ENCODE measurements at regions of chr12 and their contacts with region 1.

Region 1: GRCh38 chr12:80837348-80837985 is 100.3 kb downstream of the LIN7A start:
- DNase-seq: no peak
- ATAC-seq: peak; percentile 90
- H3K4me3 ChIP-seq: no peak overlapping the region
- H3K27ac ChIP-seq: no peak overlapping the region
- H3K4me1 ChIP-seq: 0 out of 2 replicates have a peak, but pooled peaks cover 2% of the 10 kb centered on the region
- H3K27me3 ChIP-seq: no peaks in the 10 kb centered on the region
- CTCF ChIP-seq: peak; percentile 56 to 73 (median 68)
- EP300 ChIP-seq: no peak
- POLR2A ChIP-seq: no peak
- RAD21 ChIP-seq: peak; percentile 42

Region 2: DNA sequence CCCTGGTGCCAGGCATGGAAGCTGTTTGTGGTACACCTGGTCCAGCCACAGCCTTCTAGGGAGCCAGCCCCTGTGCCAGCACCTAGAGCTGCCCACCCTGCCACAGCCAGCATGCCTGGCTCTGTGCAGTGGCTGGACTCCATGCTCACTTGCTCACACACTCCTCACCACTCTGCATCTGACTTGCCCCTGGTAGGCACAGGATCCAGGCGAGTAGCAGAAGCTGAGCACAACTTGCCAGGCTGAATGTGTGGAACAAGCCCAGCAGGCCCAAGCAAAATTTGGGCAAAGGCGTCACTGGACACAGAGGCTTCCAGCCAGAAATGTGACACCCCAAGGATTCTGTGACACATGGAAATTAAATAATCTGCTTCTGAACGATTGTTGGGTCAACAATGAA is 14.1 kb before region 1 on chr12:
- CTCF ChIA-PET with region 1: interaction called, 36 read pairs
- POLR2A ChIA-PET with region 1: interaction called, 5 read pairs
- RAD21 ChIA-PET with region 1: no interaction called
- SMC1A ChIA-PET with region 1: interaction called, 8 read pairs
- in situ Hi-C with region 1: no loop called
- intact Hi-C with region 1: no loop called
- DNase-seq: no peak
- ATAC-seq: no peak
- H3K4me3 ChIP-seq: no peak overlapping the region
- H3K27ac ChIP-seq: no peak overlapping the region
- H3K4me1 ChIP-seq: no peaks in the 10 kb centered on the region
- H3K27me3 ChIP-seq: no peaks in the 10 kb centered on the region
- CTCF ChIP-seq: no peak
- EP300 ChIP-seq: no peak
- POLR2A ChIP-seq: no peak
- RAD21 ChIP-seq: no peak

Region 3: GRCh38 chr12:81077686-81078441 is 240.4 kb after region 1 on chr12 and contains the start of gene ACSS3:
- CTCF ChIA-PET with region 1: no interaction called
- POLR2A ChIA-PET with region 1: no interaction called
- RAD21 ChIA-PET with region 1: no interaction called
- SMC1A ChIA-PET with region 1: no interaction called
- in situ Hi-C with region 1: no loop called
- intact Hi-C with region 1: no loop called
- DNase-seq: no peak
- ATAC-seq: no peak
- H3K4me3 ChIP-seq: no peak within 1 kb of the TSS
- H3K27ac ChIP-seq: no peak within 1 kb of the TSS
- H3K4me1 ChIP-seq: no peaks in the 10 kb centered on the region
- H3K27me3 ChIP-seq: peaks cover 2 to 4% of the 10 kb centered on the region in 2 experiments; a peak in 3 of 4 replicates
- CTCF ChIP-seq: no peak
- EP300 ChIP-seq: no peak
- POLR2A ChIP-seq: no peak
- RAD21 ChIP-seq: no peak
- polyA plus RNA-seq, gene ACSS3: not detected

Region 4: GRCh38 chr12:81128930-81129554 is 291.6 kb after region 1 on chr12:
- CTCF ChIA-PET with region 1: interaction called, 12 read pairs
- POLR2A ChIA-PET with region 1: no interaction called
- RAD21 ChIA-PET with region 1: no interaction called
- SMC1A ChIA-PET with region 1: no interaction called
- in situ Hi-C with region 1: no loop called
- intact Hi-C with region 1: loop called (anchors 2 kb)
- DNase-seq: peak; percentile 5
- ATAC-seq: peak; percentile 90
- H3K4me3 ChIP-seq: no peak overlapping the region
- H3K27ac ChIP-seq: no peak overlapping the region
- H3K4me1 ChIP-seq: no peaks in the 10 kb centered on the region
- H3K27me3 ChIP-seq: no peaks in the 10 kb centered on the region
- CTCF ChIP-seq: peak; percentile 66 to 81 (median 80)
- EP300 ChIP-seq: no peak
- POLR2A ChIP-seq: no peak
- RAD21 ChIP-seq: peak; percentile 60

Measured in GM12878 (cell line).